ENCODE measurements at regions of chr10 and their contacts with region 1.

Region 1: DNA sequence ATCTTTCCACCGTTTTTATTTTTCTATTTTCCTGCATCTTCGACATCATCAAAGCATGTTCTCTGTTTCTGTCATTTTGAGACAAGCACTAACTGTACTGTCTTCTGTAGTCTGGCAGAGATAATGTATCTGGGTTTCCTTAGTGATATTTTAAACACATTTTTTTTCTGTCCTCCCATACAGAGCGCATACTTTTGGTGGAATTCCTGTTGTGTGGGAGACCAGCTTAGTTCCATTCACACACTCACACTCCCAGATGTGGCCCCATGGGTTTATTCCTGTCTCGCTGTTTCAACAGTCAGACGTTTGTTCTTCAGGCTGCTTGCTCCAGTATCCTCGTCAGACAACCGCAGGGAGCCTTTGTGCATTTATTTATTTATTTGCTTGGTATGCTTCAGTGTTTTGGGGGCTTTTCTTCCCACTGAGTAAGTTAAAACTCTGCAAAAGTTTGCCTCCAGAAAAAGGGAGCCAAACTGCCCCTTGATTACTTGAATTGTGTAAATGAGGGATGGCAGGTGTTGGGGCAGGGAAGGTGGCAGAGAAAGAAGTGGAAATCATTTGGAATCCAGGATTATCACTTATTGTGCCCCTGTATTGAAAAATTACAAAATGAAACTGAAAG is 456.8 kb upstream of the KLF6 start:
- DNase-seq: no peak
- ATAC-seq: peak; percentile 73
- H3K4me3 ChIP-seq: peak overlapping the region; percentile 67 to 90
- H3K27ac ChIP-seq: peak overlapping the region; percentile 96 to 99
- H3K4me1 ChIP-seq: peaks cover 0 to 3% of the 10 kb centered on the region in 2 donors
- H3K27me3 ChIP-seq: no peaks in the 10 kb centered on the region

Region 2: DNA sequence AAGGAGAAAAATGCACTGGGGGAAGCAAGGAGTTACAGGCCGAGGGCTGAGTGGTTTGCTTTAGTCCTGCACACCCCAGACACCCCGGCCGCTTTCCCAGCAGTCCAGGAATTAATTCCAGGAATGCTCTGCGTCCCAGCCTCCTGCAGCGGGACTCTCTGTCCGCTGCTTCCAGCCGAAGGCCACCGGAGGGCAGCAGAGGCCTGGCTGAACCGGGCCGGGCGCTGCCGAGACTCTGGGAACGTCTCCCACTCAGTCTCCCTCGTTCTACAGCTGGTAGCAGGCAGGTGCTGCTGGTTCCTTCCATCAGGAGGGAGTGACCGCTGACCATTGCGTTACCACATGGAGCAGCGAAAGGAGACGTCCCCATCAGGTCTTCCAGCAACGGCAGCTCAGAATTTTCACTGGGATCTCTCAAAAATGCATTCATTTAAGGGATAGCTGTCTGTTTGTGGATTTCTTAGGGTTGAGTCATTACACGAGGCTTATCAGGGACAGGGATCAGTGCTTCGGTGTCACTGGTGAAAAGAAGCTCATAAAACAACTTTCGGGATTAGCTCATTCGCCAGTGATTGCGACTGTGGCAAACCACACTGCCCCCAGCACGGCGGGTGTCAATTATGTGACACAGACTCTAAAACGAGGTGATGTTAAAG is 1044.4 kb before region 1 on chr10:
- intact Hi-C with region 1: loop called in 1 of 2 experiments (anchors 10 kb)
- DNase-seq: peak; percentile 87 to 94
- ATAC-seq: peak; percentile 94
- H3K4me3 ChIP-seq: no peak overlapping the region
- H3K27ac ChIP-seq: peak overlapping the region in 1 of 2 donors; percentile 22
- H3K4me1 ChIP-seq: no peaks in the 10 kb centered on the region
- H3K27me3 ChIP-seq: no peaks in the 10 kb centered on the region

Region 3: GRCh38 chr10:3935141-3935540 is 306.7 kb before region 1 on chr10:
- intact Hi-C with region 1: loop called (anchors 5 to 10 kb)
- DNase-seq: peak in 1 of 2 donors; percentile 63
- ATAC-seq: peak; percentile 78
- H3K4me3 ChIP-seq: peak overlapping the region in 1 of 2 donors; percentile 13
- H3K27ac ChIP-seq: peak overlapping the region; percentile 72 to 74
- H3K4me1 ChIP-seq: peaks cover 2 to 11% of the 10 kb centered on the region in 2 donors
- H3K27me3 ChIP-seq: no peaks in the 10 kb centered on the region

Region 4: DNA sequence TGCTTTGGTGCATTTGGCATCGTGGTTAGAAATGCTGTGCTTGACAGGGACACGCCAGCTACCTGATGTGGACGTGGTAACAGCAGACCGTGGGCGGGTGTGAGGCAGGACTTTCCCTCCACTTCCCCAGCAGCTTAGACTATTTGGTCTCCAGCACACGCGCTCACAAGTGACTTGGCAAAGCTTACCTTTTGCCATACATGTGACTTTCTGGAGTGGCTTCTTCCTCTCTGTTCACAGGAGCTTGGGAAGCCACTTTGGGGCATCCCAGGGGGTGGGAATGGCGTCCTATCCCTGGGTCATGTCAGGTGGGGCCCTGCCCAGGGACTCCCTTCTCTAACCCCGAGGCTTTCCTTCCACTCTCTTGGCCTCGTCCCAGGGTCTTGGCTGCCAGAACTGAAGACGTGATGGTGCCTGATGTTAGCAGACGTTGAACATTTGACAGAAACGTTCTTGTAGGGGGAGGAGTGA is 228.1 kb before region 1 on chr10:
- intact Hi-C with region 1: no loop called
- DNase-seq: no peak
- ATAC-seq: no peak
- H3K4me3 ChIP-seq: no peak overlapping the region
- H3K27ac ChIP-seq: no peak overlapping the region
- H3K4me1 ChIP-seq: no peaks in the 10 kb centered on the region
- H3K27me3 ChIP-seq: no peaks in the 10 kb centered on the region

Region 5: GRCh38 chr10:4283846-4284610 is 42.2 kb after region 1 on chr10:
- intact Hi-C with region 1: loop called in 1 of 2 experiments (anchors 5 kb)
- DNase-seq: peak; percentile 69 to 90
- ATAC-seq: peak; percentile 88
- H3K4me3 ChIP-seq: no peak overlapping the region
- H3K27ac ChIP-seq: peak overlapping the region; percentile 92 to 98
- H3K4me1 ChIP-seq: peaks cover 5 to 13% of the 10 kb centered on the region in 2 donors
- H3K27me3 ChIP-seq: no peaks in the 10 kb centered on the region

Region 6: GRCh38 chr10:4541292-4541691 is 299.5 kb after region 1 on chr10:
- intact Hi-C with region 1: loop called in 1 of 2 experiments (anchors 5 kb)
- DNase-seq: peak; percentile 73 to 74
- ATAC-seq: peak; percentile 85
- H3K4me3 ChIP-seq: no peak overlapping the region
- H3K27ac ChIP-seq: peak overlapping the region; percentile 72 to 94
- H3K4me1 ChIP-seq: no peaks in the 10 kb centered on the region
- H3K27me3 ChIP-seq: no peaks in the 10 kb centered on the region

Measured in aorta (tissue), 5 donors.